ENCODE measurements at regions of chr12 and their contacts with region 1.

Region 1: DNA sequence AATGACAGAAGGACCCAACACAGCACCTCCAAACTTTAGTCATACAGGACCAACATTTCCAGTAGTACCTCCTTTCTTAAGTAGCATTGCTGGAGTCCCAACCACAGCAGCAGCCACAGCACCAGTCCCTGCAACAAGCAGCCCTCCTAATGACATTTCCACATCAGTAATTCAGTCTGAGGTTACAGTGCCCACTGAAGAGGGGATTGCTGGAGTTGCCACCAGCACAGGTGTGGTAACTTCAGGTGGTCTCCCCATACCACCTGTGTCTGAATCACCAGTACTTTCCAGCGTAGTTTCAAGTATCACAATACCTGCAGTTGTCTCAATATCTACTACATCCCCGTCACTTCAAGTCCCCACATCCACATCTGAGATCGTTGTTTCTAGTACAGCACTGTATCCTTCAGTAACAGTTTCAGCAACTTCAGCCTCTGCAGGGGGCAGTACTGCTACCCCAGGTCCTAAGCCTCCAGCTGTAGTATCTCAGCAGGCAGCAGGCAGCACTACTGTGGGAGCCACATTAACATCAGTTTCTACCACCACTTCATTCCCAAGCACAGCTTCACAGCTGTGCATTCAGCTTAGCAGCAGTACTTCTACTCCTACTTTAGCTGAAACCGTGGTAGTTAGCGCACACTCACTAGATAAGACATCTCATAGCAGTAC is 64.6 kb downstream of the RAD52 start:
- DNase-seq: no peak
- ATAC-seq: no peak
- H3K4me3 ChIP-seq: no peak overlapping the region
- H3K4me3 Mint-ChIP-seq: no peak overlapping the region
- H3K27ac ChIP-seq: no peak overlapping the region
- H3K27ac Mint-ChIP-seq: peak overlapping the region in 1 of 2 donors; percentile 71
- H3K4me1 ChIP-seq: no peaks in the 10 kb centered on the region
- H3K4me1 Mint-ChIP-seq: no peaks in the 10 kb centered on the region
- H3K27me3 ChIP-seq: no peaks in the 10 kb centered on the region
- H3K27me3 Mint-ChIP-seq: no peaks in the 10 kb centered on the region

Region 2: GRCh38 chr12:1553987-1554982 is 669.4 kb after region 1 on chr12:
- CTCF ChIA-PET with region 1: no interaction called
- POLR2A ChIA-PET with region 1: interaction called in 1 of 2 experiments, 11 read pairs
- DNase-seq: no peak
- ATAC-seq: no peak
- H3K4me3 ChIP-seq: no peak overlapping the region
- H3K4me3 Mint-ChIP-seq: no peak overlapping the region
- H3K27ac ChIP-seq: no peak overlapping the region
- H3K27ac Mint-ChIP-seq: no peak overlapping the region
- H3K4me1 ChIP-seq: peaks cover 0 to 2% of the 10 kb centered on the region in 2 experiments
- H3K4me1 Mint-ChIP-seq: peaks cover 0 to 4% (median 0%) of the 10 kb centered on the region in 3 donors
- H3K27me3 ChIP-seq: peaks cover 0 to 11% of the 10 kb centered on the region in 2 experiments
- H3K27me3 Mint-ChIP-seq: peaks cover 0 to 9% of the 10 kb centered on the region in 2 donors

Measured in T-cell (primary cell).